ENCODE measurements at regions of chr4 and their contacts with region 1.

Region 1: GRCh38 chr4:83284193-83285054 is at the start of gene COQ2:
- DNase-seq: peak; percentile 67
- H3K4me3 ChIP-seq: peak within 1 kb of the TSS; percentile 49
- H3K27me3 ChIP-seq: no peaks in the 10 kb centered on the region
- CTCF ChIP-seq: 0 out of 2 replicates have a peak, but pooled peaks have one; percentile 12
- polyA plus RNA-seq, gene COQ2: 14.5 and 21.0 TPM in 2 replicates

Region 2: DNA sequence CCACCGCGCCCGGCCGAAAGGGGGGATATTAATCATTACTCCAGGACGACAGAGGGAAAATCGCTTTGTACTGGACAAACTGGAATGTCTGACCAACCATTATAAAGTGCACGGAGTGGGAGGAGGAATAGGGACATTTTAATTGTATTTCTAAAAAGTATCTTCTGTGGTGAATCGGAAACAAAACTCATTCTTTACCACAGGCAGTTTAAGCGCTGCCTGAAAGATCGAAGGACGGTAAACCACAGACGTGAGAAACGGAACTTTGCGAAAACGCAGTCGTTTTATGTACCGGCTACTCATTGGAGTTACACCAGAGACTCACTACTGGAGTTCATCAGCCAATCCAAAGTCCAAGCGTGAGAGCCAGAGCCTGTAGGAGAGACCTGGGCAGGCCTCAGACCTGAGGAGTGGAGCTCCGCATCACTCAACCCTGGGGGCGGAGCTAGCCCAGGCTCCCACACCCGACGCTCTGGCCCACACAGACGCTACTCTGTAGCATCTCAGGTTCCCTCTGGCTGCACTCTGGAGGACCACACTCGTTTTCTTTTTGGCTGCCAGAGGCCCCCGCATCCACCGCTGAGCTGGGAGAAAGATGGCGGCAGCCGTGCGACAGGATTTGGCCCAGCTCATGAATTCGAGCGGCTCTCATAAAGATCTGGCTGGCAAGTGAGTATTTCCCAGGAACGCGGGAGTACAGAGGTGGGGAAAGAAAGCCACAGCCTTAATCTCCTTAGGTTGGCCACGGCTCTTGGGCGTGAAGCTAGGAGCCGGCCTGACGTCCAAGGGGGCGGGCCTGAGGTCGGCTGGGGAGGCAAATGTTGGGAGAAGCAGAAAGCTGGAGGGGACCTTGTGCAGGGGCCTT is 249.6 kb before region 1 on chr4 and contains the start of gene COPS4:
- CTCF ChIA-PET with region 1: interaction called, 12 read pairs
- POLR2A ChIA-PET with region 1: interaction called, 6 read pairs
- DNase-seq: peak; percentile 99
- H3K4me3 ChIP-seq: peak within 1 kb of the TSS; percentile 73
- H3K27me3 ChIP-seq: peaks cover 3% of the 10 kb centered on the region; the same call in 1 of the 2 replicates
- CTCF ChIP-seq: peak; percentile 64
- polyA plus RNA-seq, gene COPS4: 70.2 and 87.7 TPM in 2 replicates

Region 3: DNA sequence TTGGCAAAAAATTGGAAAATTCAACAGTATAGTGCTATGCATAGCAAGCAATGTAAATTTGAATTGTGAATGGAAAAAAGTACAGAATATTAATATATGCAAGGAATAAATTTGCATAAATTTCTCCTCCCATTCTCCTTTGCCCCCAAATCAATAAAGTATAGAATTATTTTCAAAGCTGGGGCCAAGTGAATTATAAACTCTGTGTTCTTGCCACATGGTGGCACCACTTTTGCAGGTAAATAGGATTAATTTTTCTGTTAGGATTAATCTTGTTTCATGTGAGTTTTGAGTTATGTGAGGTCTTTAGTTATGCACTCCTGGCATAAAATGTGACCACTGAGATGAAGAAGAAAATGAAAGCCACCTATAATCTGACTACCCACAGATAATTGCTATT is 229.5 kb before region 1 on chr4:
- CTCF ChIA-PET with region 1: interaction called, 29 read pairs
- POLR2A ChIA-PET with region 1: no interaction called
- DNase-seq: no peak
- H3K4me3 ChIP-seq: no peak overlapping the region
- H3K27me3 ChIP-seq: no peaks in the 10 kb centered on the region
- CTCF ChIP-seq: peak; percentile 40

Region 4: DNA sequence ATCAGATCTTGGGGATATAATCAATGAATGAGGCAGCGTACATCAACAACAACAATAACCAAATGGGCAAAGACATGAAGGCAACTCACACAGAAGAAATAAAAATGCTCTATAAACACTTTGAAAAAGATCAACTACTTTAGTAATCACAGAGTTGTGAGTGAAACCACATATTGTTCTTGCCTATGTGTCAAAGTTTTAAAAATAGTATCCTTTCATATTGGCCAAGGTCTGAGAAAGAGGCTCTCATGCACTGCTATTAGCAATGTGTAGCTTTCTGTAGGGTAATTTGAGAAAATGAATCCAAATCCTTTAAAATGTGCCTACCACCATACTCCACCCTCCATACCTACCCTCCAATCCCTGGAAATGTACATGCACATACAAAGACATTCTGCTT is 24.8 kb before region 1 on chr4:
- CTCF ChIA-PET with region 1: interaction called, 12 read pairs
- POLR2A ChIA-PET with region 1: interaction called, 10 read pairs
- DNase-seq: no peak
- H3K4me3 ChIP-seq: no peak overlapping the region
- H3K27me3 ChIP-seq: no peaks in the 10 kb centered on the region
- CTCF ChIP-seq: no peak

Region 5: DNA sequence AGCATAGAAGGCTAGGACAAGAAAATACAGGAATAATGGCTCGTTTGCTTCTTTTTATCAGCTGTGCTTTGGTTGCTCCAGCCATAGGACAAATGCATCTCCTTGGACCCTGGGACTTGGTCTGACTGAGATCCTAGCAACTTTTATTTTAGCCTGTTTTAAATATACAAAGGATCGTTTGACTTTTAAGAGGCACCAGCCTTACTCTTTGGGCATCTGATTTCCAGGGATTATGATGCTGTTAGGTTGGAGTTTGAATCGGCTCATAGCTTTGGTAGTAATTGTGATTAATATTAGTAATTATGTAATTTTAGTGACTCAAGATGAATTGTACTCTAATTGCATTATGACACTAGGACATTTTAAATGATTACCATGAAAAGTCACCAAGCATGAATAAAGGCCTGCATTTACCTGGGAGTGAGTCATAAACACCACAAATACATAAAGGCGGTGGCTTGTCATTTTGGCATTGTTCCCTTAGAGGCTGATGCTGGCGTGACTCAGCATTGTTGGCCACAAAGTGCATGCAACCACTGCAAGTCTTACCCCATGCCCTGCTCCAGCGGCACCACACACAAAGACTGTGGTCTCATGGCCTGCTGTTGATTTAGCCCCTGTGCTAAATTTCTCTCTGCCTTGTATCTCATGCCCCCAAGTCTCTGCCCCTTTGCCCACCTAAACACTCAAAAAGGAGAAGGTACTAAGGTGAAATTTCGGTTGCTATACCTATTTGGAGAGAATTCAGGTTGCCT is 263.9 kb after region 1 on chr4:
- CTCF ChIA-PET with region 1: no interaction called
- POLR2A ChIA-PET with region 1: no interaction called
- DNase-seq: peak; percentile 85
- H3K4me3 ChIP-seq: no peak overlapping the region
- H3K27me3 ChIP-seq: no peaks in the 10 kb centered on the region
- CTCF ChIP-seq: no peak

Measured in BJ (cell line).